ENCODE measurements at regions of chr12 and their contacts with region 1.

Region 1: DNA sequence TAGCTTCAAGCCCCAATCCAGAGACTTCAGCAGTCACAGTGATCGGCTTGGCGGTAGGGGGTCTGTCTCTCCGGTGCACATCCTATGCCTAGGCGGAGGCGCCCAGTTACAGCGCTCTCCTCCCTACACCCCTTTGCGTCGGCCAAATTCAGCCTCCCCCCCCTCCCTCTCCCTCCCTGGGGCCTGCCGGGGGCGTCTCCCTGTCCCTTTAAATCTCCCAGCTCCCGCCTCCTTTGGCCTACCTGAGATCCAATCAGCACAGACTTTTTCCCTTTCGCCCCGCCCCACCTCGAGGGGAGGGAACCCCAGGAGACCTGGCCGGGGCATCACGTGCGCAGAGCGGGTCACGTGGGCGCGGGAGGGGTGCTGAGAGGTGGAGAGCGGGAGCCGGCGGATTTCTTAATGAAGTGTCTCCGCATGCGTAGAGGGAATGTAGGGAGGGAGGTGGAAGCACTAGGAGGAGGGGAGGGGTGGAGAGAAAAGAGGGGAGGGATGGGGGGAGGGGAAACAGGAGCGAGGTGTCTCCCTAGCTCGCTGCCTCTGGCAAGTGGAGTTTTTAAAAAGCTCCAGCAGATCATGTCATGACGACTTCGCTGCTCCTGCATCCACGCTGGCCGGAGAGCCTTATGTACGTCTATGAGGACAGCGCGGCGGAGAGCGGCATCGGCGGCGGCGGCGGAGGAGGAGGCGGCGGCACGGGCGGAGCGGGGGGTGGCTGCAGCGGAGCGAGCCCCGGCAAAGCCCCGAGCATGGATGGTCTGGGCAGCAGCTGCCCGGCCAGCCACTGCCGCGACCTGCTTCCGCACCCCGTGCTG is at the start of gene HOXC13:
- DNase-seq: peak; percentile 95
- ATAC-seq: peak; percentile 82
- H3K4me3 ChIP-seq: peak within 1 kb of the TSS; percentile 86 to 98
- H3K27ac ChIP-seq: peak within 1 kb of the TSS; percentile 99
- H3K4me1 ChIP-seq: peaks cover 37% of the 10 kb centered on the region
- H3K27me3 ChIP-seq: no peaks in the 10 kb centered on the region
- CTCF ChIP-seq: no peak
- total RNA-seq, gene HOXC13: 93.5 TPM

Region 2: DNA sequence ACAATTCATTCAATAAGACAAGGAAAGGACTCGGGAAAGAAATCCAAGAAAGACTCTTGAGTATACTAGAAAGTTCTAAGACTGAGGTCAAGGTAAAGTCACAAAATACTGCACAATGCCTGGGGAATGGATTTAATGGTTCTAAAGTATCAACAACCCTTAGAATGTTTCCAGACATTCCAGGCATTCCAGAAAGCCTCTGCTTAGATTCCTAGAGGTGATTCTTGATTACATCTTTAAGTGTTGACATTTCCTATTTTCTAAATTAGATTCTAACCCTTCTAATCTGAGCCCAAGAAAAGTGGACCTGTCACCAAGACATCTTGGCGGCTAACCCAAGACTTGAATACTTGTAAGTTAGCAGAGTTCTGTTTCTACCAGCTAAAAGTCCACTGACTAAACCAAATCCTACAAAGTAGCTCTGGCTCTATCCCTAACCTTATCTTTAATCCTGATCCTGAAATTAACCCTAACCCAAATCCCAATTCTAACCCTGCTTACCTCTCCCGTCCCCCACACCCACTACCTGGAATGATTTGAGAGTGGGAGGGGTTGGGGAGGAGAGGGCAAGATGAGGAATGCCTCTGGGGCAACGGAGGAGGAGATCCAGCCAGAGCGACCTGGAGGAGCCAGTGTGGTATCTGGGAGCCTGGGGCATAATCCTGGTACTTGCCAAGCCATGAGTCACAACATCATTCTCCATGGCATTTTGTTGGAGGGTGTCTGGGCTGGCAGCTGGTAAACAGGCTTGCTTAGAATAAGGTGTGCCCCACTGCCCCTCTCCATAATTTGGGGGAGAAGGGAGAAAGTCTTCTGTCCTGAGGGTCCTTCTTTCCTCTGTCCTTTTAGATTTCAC is 93.3 kb before region 1 on chr12:
- CTCF ChIA-PET with region 1: interaction called, 3 read pairs
- POLR2A ChIA-PET with region 1: no interaction called
- in situ Hi-C with region 1: no loop called
- intact Hi-C with region 1: loop called (anchors 5 kb)
- DNase-seq: no peak
- ATAC-seq: peak; percentile 97
- H3K4me3 ChIP-seq: no peak overlapping the region
- H3K27ac ChIP-seq: peak overlapping the region; percentile 99
- H3K4me1 ChIP-seq: peaks cover 35% of the 10 kb centered on the region
- H3K27me3 ChIP-seq: no peaks in the 10 kb centered on the region
- CTCF ChIP-seq: no peak

Region 3: GRCh38 chr12:53867216-53868001 is 71.1 kb before region 1 on chr12:
- CTCF ChIA-PET with region 1: no interaction called
- POLR2A ChIA-PET with region 1: no interaction called
- in situ Hi-C with region 1: no loop called
- intact Hi-C with region 1: no loop called
- DNase-seq: no peak
- ATAC-seq: peak; percentile 83
- H3K4me3 ChIP-seq: no peak overlapping the region
- H3K27ac ChIP-seq: peak overlapping the region; percentile 49
- H3K4me1 ChIP-seq: peaks cover 11% of the 10 kb centered on the region
- H3K27me3 ChIP-seq: no peaks in the 10 kb centered on the region
- CTCF ChIP-seq: no peak

Region 4: DNA sequence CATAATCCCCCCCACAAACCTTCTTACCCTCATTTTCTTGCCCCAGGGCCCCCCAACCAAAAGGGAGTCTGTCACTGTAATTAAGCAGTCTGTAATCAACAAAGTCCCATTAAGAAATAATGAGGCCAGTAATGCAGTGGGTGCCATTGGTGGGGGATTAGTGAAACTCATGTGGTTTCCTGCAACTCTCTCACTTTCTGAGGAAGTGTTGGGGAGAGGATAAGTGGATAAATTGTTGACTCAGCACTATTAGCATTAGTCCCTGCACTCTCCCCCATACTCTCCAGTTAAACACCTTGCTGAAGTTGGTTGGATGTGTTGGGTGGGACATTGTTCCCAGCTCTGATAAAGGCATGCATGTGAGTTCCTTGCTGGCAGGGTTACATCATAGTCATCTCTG is 45.8 kb before region 1 on chr12:
- CTCF ChIA-PET with region 1: no interaction called
- POLR2A ChIA-PET with region 1: no interaction called
- in situ Hi-C with region 1: no loop called
- intact Hi-C with region 1: no loop called
- DNase-seq: no peak
- ATAC-seq: no peak
- H3K4me3 ChIP-seq: no peak overlapping the region
- H3K27ac ChIP-seq: no peak overlapping the region
- H3K4me1 ChIP-seq: no peaks in the 10 kb centered on the region
- H3K27me3 ChIP-seq: no peaks in the 10 kb centered on the region
- CTCF ChIP-seq: no peak

Region 5: DNA sequence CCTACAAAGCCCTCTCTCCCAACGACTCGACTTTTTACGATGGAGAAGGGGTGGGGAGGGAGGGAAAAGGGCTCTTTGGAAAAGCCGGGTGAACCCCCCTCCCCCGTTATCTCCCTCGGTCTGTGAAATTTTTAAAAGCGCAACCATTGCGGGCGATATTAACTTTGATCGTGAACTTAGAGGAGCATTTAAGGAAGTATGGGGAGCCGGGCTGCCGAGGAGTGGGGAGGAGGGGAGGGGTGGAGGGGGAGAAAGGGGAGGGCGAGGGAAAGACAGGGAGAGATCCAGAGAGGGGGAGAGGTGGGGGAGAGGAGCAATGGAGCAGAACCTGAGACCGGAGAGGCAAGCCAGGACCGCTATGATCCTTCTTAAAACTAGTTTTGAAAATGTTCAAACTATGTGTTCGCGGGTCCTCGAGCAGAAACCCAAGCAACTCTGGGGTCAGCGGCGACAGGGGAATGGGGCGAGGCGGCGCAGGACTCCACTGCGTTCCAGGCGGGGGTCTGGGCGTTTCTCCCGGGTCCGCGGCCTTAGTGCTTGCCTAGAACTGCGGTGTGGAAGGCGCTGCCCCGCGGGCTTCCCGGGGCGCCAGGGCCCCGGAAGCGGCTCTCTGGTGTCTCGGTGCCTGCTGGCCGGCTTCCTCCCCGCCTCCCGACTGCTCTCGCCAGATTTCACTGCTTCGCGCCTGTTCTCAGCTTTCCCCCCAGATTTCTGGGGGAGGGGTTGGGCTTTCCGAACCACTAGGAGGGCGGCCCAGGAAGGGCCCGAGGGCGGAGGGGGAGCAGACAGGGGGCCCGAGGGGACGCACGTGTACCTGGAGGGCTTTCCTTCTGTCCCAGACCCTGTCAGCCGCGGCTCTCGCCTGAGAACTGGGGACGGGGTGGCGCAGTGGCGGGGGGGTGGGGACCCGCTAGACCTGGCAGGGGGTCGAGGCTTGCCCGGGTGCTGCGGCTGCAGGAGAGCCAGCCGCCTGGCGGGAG is 35.8 kb after region 1 on chr12 and contains the start of gene HOTAIR:
- CTCF ChIA-PET with region 1: no interaction called
- POLR2A ChIA-PET with region 1: interaction called, 9 read pairs
- in situ Hi-C with region 1: no loop called
- intact Hi-C with region 1: loop called (anchors 1 kb)
- DNase-seq: no peak
- ATAC-seq: peak; percentile 17
- H3K4me3 ChIP-seq: peak within 1 kb of the TSS; percentile 77 to 85
- H3K27ac ChIP-seq: peak within 1 kb of the TSS; percentile 100
- H3K4me1 ChIP-seq: peaks cover 68% of the 10 kb centered on the region
- H3K27me3 ChIP-seq: no peaks in the 10 kb centered on the region
- CTCF ChIP-seq: no peak
- total RNA-seq, gene HOTAIR: 31.7 TPM

Measured in Panc1 (cell line).